A673 (cell line): ENCODE measurements at regions of chr1 and their contacts with region 1.

Region 1: GRCh38 chr1:27044613-27045151 is 32.0 kb upstream of the TENT5B start:
- DNase-seq: peak; percentile 89
- H3K4me3 ChIP-seq: no peak overlapping the region
- H3K27ac ChIP-seq: no peak overlapping the region
- H3K4me1 ChIP-seq: peaks cover 9% of the 10 kb centered on the region
- H3K27me3 ChIP-seq: no peaks in the 10 kb centered on the region
- CTCF ChIP-seq: peak; percentile 94

Region 2: GRCh38 chr1:26999440-26999987 is 45.2 kb before region 1 on chr1:
- CTCF ChIA-PET with region 1: interaction called, 25 read pairs
- POLR2A ChIA-PET with region 1: no interaction called
- intact Hi-C with region 1: loop called (anchors 2 kb)
- DNase-seq: peak; percentile 42
- H3K4me3 ChIP-seq: no peak overlapping the region
- H3K27ac ChIP-seq: no peak overlapping the region
- H3K4me1 ChIP-seq: peaks cover 20% of the 10 kb centered on the region
- H3K27me3 ChIP-seq: peaks cover 10% of the 10 kb centered on the region
- CTCF ChIP-seq: no peak

Region 3: GRCh38 chr1:27102707-27103491 is 58.2 kb after region 1 on chr1:
- CTCF ChIA-PET with region 1: interaction called, 34 read pairs
- POLR2A ChIA-PET with region 1: no interaction called
- intact Hi-C with region 1: no loop called
- DNase-seq: peak; percentile 74
- H3K4me3 ChIP-seq: no peak overlapping the region
- H3K27ac ChIP-seq: no peak overlapping the region
- H3K4me1 ChIP-seq: peaks cover 16% of the 10 kb centered on the region
- H3K27me3 ChIP-seq: no peaks in the 10 kb centered on the region
- CTCF ChIP-seq: peak; percentile 96

Region 4: GRCh38 chr1:27136998-27137542 is 92.4 kb after region 1 on chr1:
- CTCF ChIA-PET with region 1: no interaction called
- POLR2A ChIA-PET with region 1: no interaction called
- intact Hi-C with region 1: no loop called
- DNase-seq: no peak
- H3K4me3 ChIP-seq: no peak overlapping the region
- H3K27ac ChIP-seq: no peak overlapping the region
- H3K4me1 ChIP-seq: no peaks in the 10 kb centered on the region
- H3K27me3 ChIP-seq: no peaks in the 10 kb centered on the region
- CTCF ChIP-seq: no peak

Region 5: GRCh38 chr1:27284425-27285273 is 240.0 kb after region 1 on chr1:
- CTCF ChIA-PET with region 1: interaction called, 8 read pairs
- POLR2A ChIA-PET with region 1: no interaction called
- intact Hi-C with region 1: loop called (anchors 2 kb)
- DNase-seq: peak; percentile 83
- H3K4me3 ChIP-seq: no peak overlapping the region
- H3K27ac ChIP-seq: no peak overlapping the region
- H3K4me1 ChIP-seq: no peaks in the 10 kb centered on the region
- H3K27me3 ChIP-seq: no peaks in the 10 kb centered on the region
- CTCF ChIP-seq: peak; percentile 88

Region 6: GRCh38 chr1:27377760-27378495 is 333.2 kb after region 1 on chr1:
- CTCF ChIA-PET with region 1: no interaction called
- POLR2A ChIA-PET with region 1: no interaction called
- intact Hi-C with region 1: no loop called
- DNase-seq: no peak
- H3K4me3 ChIP-seq: no peak overlapping the region
- H3K27ac ChIP-seq: no peak overlapping the region
- H3K4me1 ChIP-seq: no peaks in the 10 kb centered on the region
- H3K27me3 ChIP-seq: no peaks in the 10 kb centered on the region
- CTCF ChIP-seq: no peak

Region 7: GRCh38 chr1:27392096-27392777 is 347.6 kb after region 1 on chr1 and contains the start of gene GPR3:
- CTCF ChIA-PET with region 1: interaction called, 7 read pairs
- POLR2A ChIA-PET with region 1: no interaction called
- intact Hi-C with region 1: loop called (anchors 5 kb)
- DNase-seq: peak; percentile 96
- H3K4me3 ChIP-seq: peak within 1 kb of the TSS; percentile 81
- H3K27ac ChIP-seq: peak within 1 kb of the TSS; percentile 80
- H3K4me1 ChIP-seq: peaks cover 12% of the 10 kb centered on the region
- H3K27me3 ChIP-seq: no peaks in the 10 kb centered on the region
- CTCF ChIP-seq: peak; percentile 82
- total RNA-seq, gene GPR3: 3.1 and 4.9 TPM in 2 replicates

Region 8: DNA sequence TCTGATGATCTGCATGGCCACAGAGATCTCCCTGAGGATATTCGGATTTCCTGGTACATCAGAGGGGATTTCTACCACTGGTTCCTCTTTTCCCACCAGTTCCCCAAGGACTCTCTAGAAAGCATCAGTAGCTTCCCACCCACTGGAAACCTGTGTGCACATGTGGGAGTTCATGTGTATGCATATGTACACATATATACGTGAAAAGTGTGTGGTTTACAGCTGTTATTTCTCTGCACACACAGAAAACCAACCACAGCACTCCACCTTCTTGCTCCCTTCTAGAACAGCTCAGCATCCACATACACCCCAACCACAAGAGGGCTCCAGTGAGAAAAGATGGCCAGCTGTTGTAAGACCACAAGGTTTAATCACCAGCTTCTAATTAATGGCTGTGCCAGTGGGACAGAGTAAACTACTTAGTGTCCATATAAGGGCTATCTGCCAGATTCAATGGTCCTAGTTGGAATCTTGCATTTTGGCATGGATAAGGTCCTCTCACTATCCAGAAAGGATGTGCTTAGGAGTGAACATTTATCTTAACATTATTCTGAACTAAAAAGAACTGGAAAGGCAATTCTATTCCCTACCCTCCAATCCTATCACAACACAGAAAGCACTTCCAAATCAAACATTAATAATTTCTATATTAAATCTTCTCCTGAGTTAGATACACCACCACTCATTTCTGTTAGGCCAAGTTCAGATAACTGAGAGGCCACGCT is 371.9 kb after region 1 on chr1:
- CTCF ChIA-PET with region 1: no interaction called
- POLR2A ChIA-PET with region 1: no interaction called
- intact Hi-C with region 1: no loop called
- DNase-seq: peak; percentile 71
- H3K4me3 ChIP-seq: no peak overlapping the region
- H3K27ac ChIP-seq: no peak overlapping the region
- H3K4me1 ChIP-seq: no peaks in the 10 kb centered on the region
- H3K27me3 ChIP-seq: no peaks in the 10 kb centered on the region
- CTCF ChIP-seq: peak; percentile 73